ENCODE measurements at regions of chr2 and their contacts with region 1.

Region 1: DNA sequence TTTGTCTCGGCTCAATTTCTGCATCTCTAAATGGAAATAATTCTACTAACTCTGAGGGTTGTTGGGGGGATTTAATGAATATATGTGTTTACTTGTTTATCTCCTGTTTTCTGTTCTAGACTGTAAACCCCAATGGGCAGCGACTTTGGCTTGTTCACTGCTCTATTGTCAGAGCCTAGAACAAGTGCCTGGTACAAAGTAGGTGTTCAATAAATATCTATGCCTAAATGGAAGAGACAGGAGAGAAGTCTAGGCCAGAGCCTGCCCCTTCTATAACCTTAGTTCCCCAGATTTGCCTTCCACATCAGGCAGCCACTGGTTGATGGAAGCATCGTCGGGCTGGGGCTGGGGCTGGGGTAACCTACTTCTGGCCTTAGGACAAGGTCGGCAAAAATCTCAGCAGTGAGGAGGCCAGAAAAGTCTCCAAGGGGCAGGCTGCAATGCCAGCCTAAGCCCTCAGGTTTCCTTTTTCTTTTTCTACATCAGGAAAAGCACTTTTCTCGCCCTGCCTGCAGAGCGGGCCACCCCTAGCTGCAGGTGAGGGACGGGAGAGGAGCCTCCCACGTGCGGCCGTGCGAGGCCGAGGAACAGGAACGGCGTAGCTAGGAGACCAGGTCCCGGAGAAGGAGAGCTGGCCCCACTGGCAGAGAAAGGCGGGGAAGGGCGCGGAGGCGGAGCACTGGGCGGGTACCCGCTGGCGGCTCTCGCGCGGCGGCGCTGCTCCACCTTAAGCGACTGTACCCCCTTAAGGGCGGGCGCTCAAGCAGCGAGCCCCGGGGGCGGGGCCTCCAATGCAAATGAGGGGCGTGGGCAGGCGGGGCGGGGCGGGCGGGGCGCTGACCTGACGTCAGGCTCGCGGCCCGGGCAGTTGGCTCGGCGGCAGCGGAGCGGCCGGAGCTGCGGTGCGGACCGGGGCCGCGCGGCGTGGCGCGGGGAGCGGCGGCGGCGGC is at the start of gene CNNM4:
- DNase-seq: peak; percentile 94
- H3K4me3 Mint-ChIP-seq: peak within 1 kb of the TSS; percentile 81
- H3K27ac Mint-ChIP-seq: peak within 1 kb of the TSS; percentile 70
- H3K4me1 Mint-ChIP-seq: peaks cover 48% of the 10 kb centered on the region
- H3K27me3 Mint-ChIP-seq: no peaks in the 10 kb centered on the region
- total RNA-seq, gene CNNM4: 5.6 to 6.0 TPM

Region 2: GRCh38 chr2:96265840-96266679 is 494.3 kb before region 1 on chr2 and contains the starts of genes CIAO1 and TMEM127:
- CTCF ChIA-PET with region 1: no interaction called
- intact Hi-C with region 1: loop called (anchors 5 kb)
- DNase-seq: peak; percentile 99
- H3K4me3 Mint-ChIP-seq: peak within 1 kb of the TSS; percentile 99
- H3K27ac Mint-ChIP-seq: peak within 1 kb of the TSS; percentile 86
- H3K4me1 Mint-ChIP-seq: peaks cover 47% of the 10 kb centered on the region
- H3K27me3 Mint-ChIP-seq: no peaks in the 10 kb centered on the region
- total RNA-seq, gene CIAO1: 59.9 to 62.2 TPM
- total RNA-seq, gene TMEM127: 12.9 to 16.1 TPM

Region 3: GRCh38 chr2:96463119-96463518 is 297.2 kb before region 1 on chr2:
- CTCF ChIA-PET with region 1: no interaction called
- intact Hi-C with region 1: no loop called
- DNase-seq: no peak
- H3K4me3 Mint-ChIP-seq: no peak overlapping the region
- H3K27ac Mint-ChIP-seq: no peak overlapping the region
- H3K4me1 Mint-ChIP-seq: no peaks in the 10 kb centered on the region
- H3K27me3 Mint-ChIP-seq: no peaks in the 10 kb centered on the region

Region 4: GRCh38 chr2:96554293-96555145 is 205.8 kb before region 1 on chr2:
- CTCF ChIA-PET with region 1: interaction called, 4 read pairs
- intact Hi-C with region 1: loop called (anchors 5 kb)
- DNase-seq: peak; percentile 73
- H3K4me3 Mint-ChIP-seq: peak overlapping the region; percentile 52
- H3K27ac Mint-ChIP-seq: peak overlapping the region; percentile 88
- H3K4me1 Mint-ChIP-seq: peaks cover 34% of the 10 kb centered on the region
- H3K27me3 Mint-ChIP-seq: no peaks in the 10 kb centered on the region

Region 5: DNA sequence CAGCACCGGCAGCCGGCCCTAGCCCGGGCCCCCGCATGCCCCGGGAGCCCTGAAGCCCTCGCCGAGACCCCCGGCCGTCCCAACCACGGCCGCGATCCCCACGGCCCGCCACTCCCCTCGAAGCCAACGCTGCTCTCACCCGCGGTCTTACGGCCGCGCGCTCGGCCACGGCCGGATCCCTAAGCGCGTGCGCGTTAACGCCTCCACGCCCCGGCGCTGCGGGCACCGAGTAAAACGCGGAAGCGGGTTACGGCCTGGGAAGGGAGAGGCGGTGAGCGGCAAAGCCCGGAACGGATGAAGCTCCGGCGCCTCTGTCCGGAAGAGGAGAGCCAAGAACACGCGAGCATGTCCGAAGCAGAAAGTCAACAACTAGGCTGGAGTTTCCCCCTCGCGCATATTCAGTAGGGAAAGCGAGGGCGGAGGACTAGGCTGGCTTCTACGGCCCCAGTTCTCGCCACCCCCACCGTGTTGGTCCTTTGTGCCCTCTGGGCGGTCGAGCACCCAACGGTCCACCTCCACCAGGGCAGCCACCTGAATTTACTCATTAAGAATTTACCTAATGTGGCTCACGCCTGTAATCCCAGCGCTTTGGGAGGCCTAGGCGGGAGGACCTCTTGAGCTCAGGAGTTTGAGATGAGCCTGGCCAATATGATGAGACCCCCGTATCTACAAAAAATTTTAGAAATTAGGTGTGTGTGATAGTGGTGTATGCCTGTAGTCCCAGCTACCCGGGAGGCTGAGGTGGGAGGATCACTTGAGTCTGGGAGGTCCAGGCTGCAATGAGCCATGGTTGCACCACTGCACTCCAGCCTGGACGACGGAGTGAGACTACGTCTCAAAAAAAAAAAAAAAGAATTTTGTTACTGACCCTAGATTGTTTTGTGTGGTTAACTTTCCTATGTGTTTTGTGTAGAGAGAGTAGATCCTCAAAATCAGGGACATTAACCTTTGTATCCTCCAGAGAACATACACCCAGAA is 121.9 kb before region 1 on chr2 and contains the start of gene KANSL3:
- CTCF ChIA-PET with region 1: interaction called, 13 read pairs
- intact Hi-C with region 1: loop called (anchors 1 kb)
- DNase-seq: peak; percentile 92
- H3K4me3 Mint-ChIP-seq: peak within 1 kb of the TSS; percentile 93
- H3K27ac Mint-ChIP-seq: peak within 1 kb of the TSS; percentile 85
- H3K4me1 Mint-ChIP-seq: peaks cover 31% of the 10 kb centered on the region
- H3K27me3 Mint-ChIP-seq: no peaks in the 10 kb centered on the region
- total RNA-seq, gene KANSL3: 33.0 to 37.5 TPM

Region 6: GRCh38 chr2:96773922-96774321 is 13.6 kb after region 1 on chr2:
- CTCF ChIA-PET with region 1: interaction called, 46 read pairs
- intact Hi-C with region 1: loop called (anchors 1 kb)
- DNase-seq: peak; percentile 70
- H3K4me3 Mint-ChIP-seq: peak overlapping the region; percentile 57
- H3K27ac Mint-ChIP-seq: peak overlapping the region; percentile 61
- H3K4me1 Mint-ChIP-seq: peaks cover 21% of the 10 kb centered on the region
- H3K27me3 Mint-ChIP-seq: no peaks in the 10 kb centered on the region

Region 7: GRCh38 chr2:96816128-96816835 is 56.0 kb after region 1 on chr2 and contains the start of gene CNNM3:
- CTCF ChIA-PET with region 1: interaction called, 20 read pairs
- intact Hi-C with region 1: loop called (anchors 1 kb)
- DNase-seq: peak; percentile 97
- H3K4me3 Mint-ChIP-seq: peak within 1 kb of the TSS; percentile 77
- H3K27ac Mint-ChIP-seq: peak within 1 kb of the TSS; percentile 40
- H3K4me1 Mint-ChIP-seq: peaks cover 54% of the 10 kb centered on the region
- H3K27me3 Mint-ChIP-seq: no peaks in the 10 kb centered on the region
- total RNA-seq, gene CNNM3: 17.3 to 19.9 TPM

Region 8: GRCh38 chr2:96839293-96839874 is 79.1 kb after region 1 on chr2:
- CTCF ChIA-PET with region 1: no interaction called
- intact Hi-C with region 1: no loop called
- DNase-seq: peak; percentile 89
- H3K4me3 Mint-ChIP-seq: peak overlapping the region; percentile 49
- H3K27ac Mint-ChIP-seq: no peak overlapping the region
- H3K4me1 Mint-ChIP-seq: peaks cover 11% of the 10 kb centered on the region
- H3K27me3 Mint-ChIP-seq: no peaks in the 10 kb centered on the region

Measured in activated naive CD4-positive, alpha-beta T cell treated with anti-CD3 and anti-CD28 coated beads for 36 hours (primary cell).